ENCODE measurements at regions of chr2 and their contacts with region 1.

Region 1: DNA sequence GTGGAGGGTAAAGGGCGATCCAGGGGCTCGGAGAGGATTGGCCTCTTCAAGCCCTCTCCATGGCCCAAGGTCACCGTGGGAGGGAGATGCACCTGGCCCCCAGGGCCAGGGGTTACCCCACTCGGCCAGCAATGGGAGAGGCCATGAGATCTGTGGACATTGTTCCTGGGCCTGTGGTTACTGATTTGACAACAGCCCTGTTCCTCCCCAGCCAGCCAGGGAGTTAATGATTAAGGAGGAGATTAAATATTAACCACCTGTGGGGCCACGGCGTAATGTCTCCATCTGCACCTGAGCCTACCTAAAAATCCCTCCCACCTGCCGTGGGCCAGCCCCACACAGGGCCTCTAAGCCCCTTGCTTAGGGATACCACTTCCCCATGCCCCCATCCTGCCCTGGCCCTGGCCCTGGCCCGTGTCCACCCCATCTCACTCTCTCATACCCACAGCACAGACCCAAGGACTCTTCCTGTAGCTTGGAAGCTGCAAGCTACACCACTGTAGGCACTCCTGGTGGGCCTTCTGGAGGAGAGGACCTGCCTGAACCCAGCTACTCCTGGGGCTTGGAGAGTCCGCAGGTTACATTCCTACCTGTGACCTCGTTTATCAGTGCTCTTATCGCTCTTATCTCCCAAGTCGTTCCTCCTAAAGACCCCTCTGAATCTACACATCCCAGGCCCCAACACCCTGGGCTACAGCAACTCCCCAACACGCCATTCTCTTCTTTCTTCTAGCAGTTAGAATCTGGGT is 32.1 kb downstream of the ZFP36L2 start:
- DNase-seq: peak in 1 of 5 donors; percentile 33
- H3K4me3 ChIP-seq: peak overlapping the region; percentile 14 to 47
- H3K4me3 Mint-ChIP-seq: peak overlapping the region; percentile 85 to 98 (median 92)
- H3K27ac ChIP-seq: peak overlapping the region; percentile 95
- H3K27ac Mint-ChIP-seq: peak overlapping the region; percentile 95 to 100 (median 99)
- H3K4me1 ChIP-seq: peaks cover 73% of the 10 kb centered on the region
- H3K4me1 Mint-ChIP-seq: peaks cover 35 to 74% (median 53%) of the 10 kb centered on the region in 4 donors
- H3K27me3 ChIP-seq: no peaks in the 10 kb centered on the region
- H3K27me3 Mint-ChIP-seq: no peaks in the 10 kb centered on the region

Region 2: DNA sequence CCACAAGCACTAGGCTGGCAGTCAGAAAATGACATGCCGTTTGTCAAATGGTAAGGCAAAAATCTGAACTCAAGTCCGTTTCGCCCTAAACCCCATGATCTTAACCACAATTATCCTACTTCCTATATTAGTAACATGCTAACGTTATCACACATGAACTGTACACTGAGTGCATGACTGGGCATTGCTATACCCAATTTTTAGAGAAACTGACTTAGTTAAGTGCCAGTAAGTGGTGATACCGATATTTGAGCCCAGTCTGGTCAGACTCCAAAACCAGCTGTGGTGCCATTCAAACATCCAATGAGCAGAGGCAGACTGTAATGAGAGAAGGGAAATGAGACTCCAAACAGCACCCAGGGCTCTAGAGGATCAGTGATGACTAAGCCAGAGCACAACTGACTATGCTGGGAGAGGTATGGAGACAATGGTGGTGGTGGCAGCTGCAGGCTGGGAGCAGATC is 1458.2 kb before region 1 on chr2:
- CTCF ChIA-PET with region 1: no interaction called
- POLR2A ChIA-PET with region 1: no interaction called
- intact Hi-C with region 1: no loop called
- DNase-seq: no peak
- H3K4me3 ChIP-seq: no peak overlapping the region
- H3K4me3 Mint-ChIP-seq: no peak overlapping the region
- H3K27ac ChIP-seq: no peak overlapping the region
- H3K27ac Mint-ChIP-seq: no peak overlapping the region
- H3K4me1 ChIP-seq: no peaks in the 10 kb centered on the region
- H3K4me1 Mint-ChIP-seq: peaks cover 0 to 8% (median under 1%) of the 10 kb centered on the region in 4 donors
- H3K27me3 ChIP-seq: no peaks in the 10 kb centered on the region
- H3K27me3 Mint-ChIP-seq: peaks cover 7 to 18% of the 10 kb centered on the region in 2 donors

Region 3: GRCh38 chr2:43139996-43140621 is 54.2 kb before region 1 on chr2:
- CTCF ChIA-PET with region 1: interaction called, 28 read pairs
- POLR2A ChIA-PET with region 1: interaction called, 6,960 read pairs
- intact Hi-C with region 1: loop called (anchors 1 kb)
- DNase-seq: peak in 4 of 5 donors; percentile 48 to 65 (median 58)
- H3K4me3 ChIP-seq: no peak overlapping the region
- H3K4me3 Mint-ChIP-seq: peak overlapping the region in 7 of 8 donors; percentile 27 to 86 (median 67)
- H3K27ac ChIP-seq: peak overlapping the region; percentile 83
- H3K27ac Mint-ChIP-seq: peak overlapping the region; percentile 91 to 98 (median 95)
- H3K4me1 ChIP-seq: peaks cover 75% of the 10 kb centered on the region
- H3K4me1 Mint-ChIP-seq: peaks cover 48 to 80% (median 62%) of the 10 kb centered on the region in 4 donors
- H3K27me3 ChIP-seq: no peaks in the 10 kb centered on the region
- H3K27me3 Mint-ChIP-seq: no peaks in the 10 kb centered on the region

Region 4: DNA sequence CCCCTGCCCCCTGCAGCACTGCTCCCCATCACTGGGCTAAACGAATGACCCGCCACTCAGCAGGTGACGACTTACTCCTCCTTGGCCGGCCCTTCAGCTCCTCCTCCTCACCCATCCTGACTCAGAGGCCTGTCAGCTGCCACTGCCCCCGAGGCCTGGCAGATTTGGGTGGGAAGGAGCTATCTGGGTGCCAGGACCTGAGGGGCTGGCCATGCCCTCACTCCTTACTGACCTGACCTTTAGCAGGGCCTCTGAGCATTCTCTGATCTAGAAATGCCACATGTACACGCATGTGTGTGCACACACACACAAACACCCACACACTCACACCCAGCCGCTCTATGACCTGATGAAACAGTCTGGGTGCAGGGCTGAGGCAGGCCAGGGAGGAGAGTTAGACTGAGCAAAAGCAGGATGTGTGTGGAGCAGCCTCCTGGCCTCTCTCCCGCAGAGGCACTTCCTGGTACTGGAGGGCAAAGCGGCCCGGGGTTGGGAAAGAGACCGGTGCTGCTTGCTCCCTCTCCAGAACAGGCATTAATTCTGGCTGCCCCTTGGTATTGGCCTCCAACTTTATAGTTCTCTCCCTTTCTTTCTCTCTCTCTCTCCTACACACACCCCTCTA is 35.9 kb before region 1 on chr2:
- CTCF ChIA-PET with region 1: interaction called, 4 read pairs
- POLR2A ChIA-PET with region 1: interaction called, 6,960 read pairs
- intact Hi-C with region 1: loop called (anchors 1 kb)
- DNase-seq: peak in 1 of 5 donors; percentile 55
- H3K4me3 ChIP-seq: peak overlapping the region; percentile 30 to 40
- H3K4me3 Mint-ChIP-seq: peak overlapping the region; percentile 75 to 87 (median 80)
- H3K27ac ChIP-seq: peak overlapping the region; percentile 84
- H3K27ac Mint-ChIP-seq: peak overlapping the region; percentile 97 to 99 (median 99)
- H3K4me1 ChIP-seq: peaks cover 76% of the 10 kb centered on the region
- H3K4me1 Mint-ChIP-seq: peaks cover 41 to 94% (median 66%) of the 10 kb centered on the region in 4 donors
- H3K27me3 ChIP-seq: no peaks in the 10 kb centered on the region
- H3K27me3 Mint-ChIP-seq: no peaks in the 10 kb centered on the region

Region 5: DNA sequence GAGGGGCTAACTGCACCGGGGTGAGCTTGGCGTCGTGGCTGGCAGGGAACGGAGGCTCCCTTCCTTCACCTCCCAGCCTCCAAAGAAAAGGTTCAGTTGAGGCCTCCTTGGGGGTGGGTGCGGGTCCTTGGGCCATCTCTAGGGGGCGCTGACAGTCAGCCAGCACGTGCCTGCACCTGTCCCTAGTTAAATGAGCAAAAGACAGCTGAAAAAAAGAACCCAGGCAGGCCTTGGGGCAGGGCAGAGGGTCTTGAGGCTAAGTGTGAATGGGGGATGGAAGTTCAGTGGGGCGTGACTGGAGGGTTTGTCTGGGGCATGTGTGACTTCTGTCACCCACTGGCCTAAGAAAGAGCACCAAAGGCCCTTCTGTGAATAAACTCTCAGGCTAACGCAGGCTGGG is 24.3 kb before region 1 on chr2:
- CTCF ChIA-PET with region 1: interaction called, 96 read pairs
- POLR2A ChIA-PET with region 1: interaction called, 6,960 read pairs
- intact Hi-C with region 1: loop called (anchors 1 kb)
- DNase-seq: peak; percentile 66 to 74 (median 69)
- H3K4me3 ChIP-seq: peak overlapping the region in 1 of 2 donors; percentile 42
- H3K4me3 Mint-ChIP-seq: peak overlapping the region; percentile 36 to 89 (median 82)
- H3K27ac ChIP-seq: peak overlapping the region; percentile 65
- H3K27ac Mint-ChIP-seq: peak overlapping the region; percentile 93 to 99 (median 98)
- H3K4me1 ChIP-seq: peaks cover 83% of the 10 kb centered on the region
- H3K4me1 Mint-ChIP-seq: peaks cover 49 to 85% (median 70%) of the 10 kb centered on the region in 4 donors
- H3K27me3 ChIP-seq: no peaks in the 10 kb centered on the region
- H3K27me3 Mint-ChIP-seq: no peaks in the 10 kb centered on the region

Region 6: GRCh38 chr2:43178602-43179542 is 15.4 kb before region 1 on chr2:
- CTCF ChIA-PET with region 1: interaction called, 96 read pairs
- POLR2A ChIA-PET with region 1: interaction called, 6,960 read pairs
- intact Hi-C with region 1: loop called (anchors 1 kb)
- DNase-seq: peak in 1 of 5 donors; percentile 61
- H3K4me3 ChIP-seq: peak overlapping the region in 1 of 2 donors; percentile 7
- H3K4me3 Mint-ChIP-seq: peak overlapping the region in 7 of 8 donors; percentile 54 to 82 (median 72)
- H3K27ac ChIP-seq: peak overlapping the region; percentile 53
- H3K27ac Mint-ChIP-seq: peak overlapping the region; percentile 93 to 99 (median 98)
- H3K4me1 ChIP-seq: peaks cover 84% of the 10 kb centered on the region
- H3K4me1 Mint-ChIP-seq: peaks cover 58 to 80% (median 70%) of the 10 kb centered on the region in 4 donors
- H3K27me3 ChIP-seq: no peaks in the 10 kb centered on the region
- H3K27me3 Mint-ChIP-seq: no peaks in the 10 kb centered on the region